H1 (cell line): ENCODE measurements at regions of chr1 and their contacts with region 1.

Region 1: GRCh38 chr1:20493839-20494608 is 8.0 kb upstream of the CAMK2N1 start:
- DNase-seq: peak; percentile 81 to 97
- H3K4me3 ChIP-seq: peak overlapping the region in 3 of 4 experiments; percentile 20 to 48 (median 26); a peak in 5 of 8 replicates
- H3K27ac ChIP-seq: no peak overlapping the region
- H3K4me1 ChIP-seq: peaks cover 0 to 11% (median 0%) of the 10 kb centered on the region in 4 experiments; a peak in 3 of 7 replicates
- H3K27me3 ChIP-seq: peaks cover 0 to 6% (median under 1%) of the 10 kb centered on the region in 4 experiments; a peak in 4 of 7 replicates
- CTCF ChIP-seq: peak; percentile 91 to 99 (median 96)
- EP300 ChIP-seq: 0 out of 3 replicates have a peak, but pooled peaks of 1 of the 2 experiments have one; percentile 14
- POLR2A ChIP-seq: no peak
- RAD21 ChIP-seq: peak; percentile 99 to 100

Region 2: GRCh38 chr1:20165522-20165951 is 328.5 kb before region 1 on chr1:
- CTCF ChIA-PET with region 1: interaction called, 34 read pairs
- POLR2A ChIA-PET with region 1: no interaction called
- DNase-seq: no peak
- H3K4me3 ChIP-seq: no peak overlapping the region
- H3K27ac ChIP-seq: no peak overlapping the region
- H3K4me1 ChIP-seq: peaks cover 0 to 5% (median 0%) of the 10 kb centered on the region in 4 experiments; a peak in 2 of 7 replicates
- H3K27me3 ChIP-seq: no peaks in the 10 kb centered on the region
- CTCF ChIP-seq: peak; percentile 33 to 74 (median 65)
- EP300 ChIP-seq: no peak
- POLR2A ChIP-seq: no peak
- RAD21 ChIP-seq: peak; percentile 58 to 74

Region 3: DNA sequence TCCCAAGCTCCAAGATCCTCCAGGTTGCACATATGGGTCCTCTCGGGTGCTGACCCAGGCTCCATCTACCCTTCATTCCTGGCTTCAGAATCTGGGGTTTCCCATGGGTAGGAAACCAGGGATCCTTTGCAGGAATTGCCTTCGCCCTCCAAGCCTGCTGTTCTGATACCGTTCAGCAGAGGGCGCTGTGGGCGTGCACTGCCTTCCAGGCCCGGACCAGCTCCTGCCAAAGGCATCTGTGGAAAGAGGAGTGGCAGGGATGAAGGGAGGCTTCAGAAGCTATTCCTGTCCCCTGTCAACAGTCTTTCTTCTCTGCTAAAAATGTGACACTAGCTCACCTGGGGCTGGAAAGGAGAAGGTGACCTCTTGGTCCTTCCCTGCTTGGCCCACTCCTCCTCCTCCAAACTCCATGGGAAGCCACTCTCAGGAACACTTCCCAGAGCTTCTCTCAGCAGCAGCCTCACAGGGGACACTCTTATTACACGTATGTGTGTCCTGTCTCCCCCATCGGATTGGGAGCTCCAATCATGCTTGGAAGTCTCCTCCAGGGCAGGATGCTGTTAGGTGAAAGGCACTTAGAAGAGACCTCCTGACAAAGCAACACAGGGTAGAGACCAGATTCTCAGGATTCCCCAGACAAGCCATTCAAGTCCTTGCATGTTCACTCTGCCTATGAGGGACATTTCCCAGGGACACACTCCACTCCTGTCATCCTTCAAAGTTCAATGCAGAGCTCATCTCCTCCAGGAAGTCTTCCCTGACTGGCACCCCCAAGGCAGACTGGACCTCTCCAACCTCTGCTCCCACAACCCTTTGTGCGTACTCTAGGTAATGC is 132.0 kb before region 1 on chr1:
- CTCF ChIA-PET with region 1: interaction called, 37 read pairs
- POLR2A ChIA-PET with region 1: no interaction called
- DNase-seq: peak; percentile 54 to 99
- H3K4me3 ChIP-seq: no peak overlapping the region
- H3K27ac ChIP-seq: no peak overlapping the region
- H3K4me1 ChIP-seq: peaks cover 0 to 10% (median 4%) of the 10 kb centered on the region in 4 experiments; a peak in 4 of 7 replicates
- H3K27me3 ChIP-seq: peaks cover 13 to 48% (median 30%) of the 10 kb centered on the region in 4 experiments
- CTCF ChIP-seq: peak; percentile 96 to 98 (median 97)
- EP300 ChIP-seq: no peak
- POLR2A ChIP-seq: no peak
- RAD21 ChIP-seq: peak; percentile 90 to 91

Region 4: GRCh38 chr1:20430355-20431175 is 63.5 kb before region 1 on chr1:
- CTCF ChIA-PET with region 1: interaction called, 54 read pairs
- POLR2A ChIA-PET with region 1: interaction called, 3 read pairs
- DNase-seq: peak; percentile 50 to 94
- H3K4me3 ChIP-seq: no peak overlapping the region
- H3K27ac ChIP-seq: no peak overlapping the region
- H3K4me1 ChIP-seq: peaks cover 0 to 6% (median 0%) of the 10 kb centered on the region in 4 experiments; a peak in 2 of 7 replicates
- H3K27me3 ChIP-seq: peaks cover 0 to 5% (median under 1%) of the 10 kb centered on the region in 4 experiments; a peak in 3 of 7 replicates
- CTCF ChIP-seq: peak; percentile 93 to 96 (median 93)
- EP300 ChIP-seq: no peak
- POLR2A ChIP-seq: no peak
- RAD21 ChIP-seq: peak; percentile 96 to 98

Region 5: DNA sequence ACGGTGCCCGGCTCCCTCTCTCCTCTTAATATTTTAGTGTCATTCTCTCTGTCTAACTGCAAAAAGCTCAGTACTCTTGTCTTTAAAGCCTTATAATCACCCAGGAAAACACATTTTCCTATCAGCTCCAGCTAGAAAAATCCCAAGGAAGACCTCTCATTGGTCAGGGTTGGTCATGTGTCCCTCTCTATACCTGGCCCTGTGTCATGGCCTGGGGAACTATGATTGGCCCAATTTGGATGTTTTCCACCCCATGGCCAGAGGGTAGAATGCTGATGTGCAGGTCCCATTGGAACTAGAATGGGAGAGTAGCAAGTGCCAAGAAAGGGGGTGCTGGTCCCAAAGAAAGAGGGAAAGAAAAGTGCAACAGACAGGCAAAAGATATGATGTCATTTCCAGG is 35.3 kb before region 1 on chr1:
- CTCF ChIA-PET with region 1: interaction called, 11 read pairs
- POLR2A ChIA-PET with region 1: no interaction called
- DNase-seq: no peak
- H3K4me3 ChIP-seq: no peak overlapping the region
- H3K27ac ChIP-seq: no peak overlapping the region
- H3K4me1 ChIP-seq: no peaks in the 10 kb centered on the region
- H3K27me3 ChIP-seq: no peaks in the 10 kb centered on the region; a peak in 1 of 7 replicates
- CTCF ChIP-seq: no peak
- EP300 ChIP-seq: no peak
- POLR2A ChIP-seq: no peak
- RAD21 ChIP-seq: no peak

Region 6: DNA sequence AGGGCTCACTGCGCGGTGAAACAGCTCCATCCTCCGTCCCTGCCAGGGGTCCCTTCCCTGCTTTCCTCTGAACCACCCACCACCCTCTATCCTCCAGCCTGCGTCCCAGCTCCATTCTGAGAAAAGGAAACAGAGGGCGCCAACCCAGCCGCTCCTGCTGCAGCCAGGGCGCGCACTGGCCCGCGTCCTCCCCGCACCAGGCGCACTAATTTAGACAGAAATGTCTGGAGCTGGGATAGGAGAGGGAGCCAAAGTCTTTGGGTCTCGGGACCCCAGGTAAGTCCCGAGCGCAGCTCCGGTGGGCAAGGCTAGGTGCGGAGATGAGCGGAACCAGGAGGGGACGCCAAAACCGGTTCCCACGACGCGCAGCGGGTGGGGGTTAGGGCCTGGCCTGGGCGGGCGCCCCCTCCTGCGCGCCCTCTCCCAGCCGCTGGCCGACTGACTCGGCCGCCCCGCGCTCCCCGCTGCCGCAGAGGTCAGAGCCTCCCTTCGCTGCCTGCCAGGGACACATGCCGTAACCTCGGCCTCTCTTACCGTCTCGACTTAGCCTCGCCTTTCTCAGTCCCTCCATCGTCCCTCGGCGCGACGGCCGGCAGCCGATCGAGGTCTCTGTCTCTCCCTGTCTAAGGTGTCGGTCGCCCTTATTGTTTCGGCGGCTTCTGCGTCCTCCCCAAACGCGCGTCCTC is 10.0 kb before region 1 on chr1:
- CTCF ChIA-PET with region 1: interaction called, 42 read pairs
- POLR2A ChIA-PET with region 1: interaction called, 4 read pairs
- DNase-seq: peak in 1 of 2 experiments; percentile 81
- H3K4me3 ChIP-seq: peak overlapping the region; percentile 61 to 74 (median 68)
- H3K27ac ChIP-seq: no peak overlapping the region
- H3K4me1 ChIP-seq: peaks cover 6 to 35% (median 13%) of the 10 kb centered on the region in 4 experiments
- H3K27me3 ChIP-seq: peaks cover 4 to 59% (median 39%) of the 10 kb centered on the region in 4 experiments
- CTCF ChIP-seq: peak; percentile 34 to 45 (median 36)
- EP300 ChIP-seq: no peak
- POLR2A ChIP-seq: no peak
- RAD21 ChIP-seq: peak; percentile 1 to 24; a peak in 2 of 4 replicates

Region 7: DNA sequence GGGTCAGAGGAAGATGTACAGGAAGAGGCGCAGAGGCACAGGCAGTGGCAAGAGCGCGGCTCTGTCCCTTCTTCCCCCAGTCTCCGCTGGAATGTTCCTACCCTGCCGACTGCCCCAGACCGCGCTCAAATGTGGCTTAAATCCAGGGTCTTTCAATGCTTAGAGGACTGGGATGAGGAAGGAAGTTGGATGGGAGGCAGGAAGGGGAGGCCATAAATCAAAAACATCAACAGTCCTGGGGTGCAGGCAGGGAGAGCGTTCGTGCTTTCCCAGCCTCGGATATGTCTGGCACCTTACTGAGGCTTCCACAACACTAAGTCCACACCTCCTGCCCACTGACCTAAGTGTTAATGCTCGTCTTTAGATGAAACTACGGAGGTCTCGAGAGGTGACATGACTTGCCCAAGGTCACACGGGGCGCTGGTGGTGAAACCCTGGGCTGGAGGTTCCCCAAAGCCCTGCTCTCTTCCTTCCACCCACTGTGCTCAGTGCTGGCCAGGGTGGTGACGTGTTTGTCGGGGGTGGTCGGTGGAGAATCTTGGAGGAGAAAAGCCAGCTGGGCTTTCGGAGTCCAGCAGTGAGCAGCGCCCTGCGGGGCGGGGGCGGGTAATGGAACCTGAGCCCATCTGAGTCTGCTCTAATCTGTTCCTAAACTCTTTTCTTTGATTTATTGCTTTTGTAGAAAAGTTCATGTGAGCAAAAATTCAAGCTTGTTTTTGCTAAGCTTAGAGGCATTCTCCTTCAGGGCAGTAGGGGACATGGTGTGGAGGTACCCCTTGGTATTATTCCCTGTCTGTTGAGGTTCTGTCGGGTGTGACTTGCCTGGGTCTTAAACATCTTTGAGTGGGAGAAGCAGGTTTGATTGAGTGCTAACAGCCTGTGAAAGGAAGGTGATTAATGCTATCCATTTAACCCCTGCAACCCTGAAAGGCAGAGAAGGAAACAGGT is 95.6 kb after region 1 on chr1:
- CTCF ChIA-PET with region 1: no interaction called
- POLR2A ChIA-PET with region 1: no interaction called
- DNase-seq: no peak
- H3K4me3 ChIP-seq: peak overlapping the region in 1 of 4 experiments; percentile 30; a peak in 2 of 8 replicates
- H3K27ac ChIP-seq: no peak overlapping the region
- H3K4me1 ChIP-seq: peaks cover 0 to 16% (median 12%) of the 10 kb centered on the region in 4 experiments; a peak in 5 of 7 replicates
- H3K27me3 ChIP-seq: no peaks in the 10 kb centered on the region
- CTCF ChIP-seq: no peak
- EP300 ChIP-seq: no peak
- POLR2A ChIP-seq: no peak
- RAD21 ChIP-seq: no peak